ENCODE measurements at regions of chr20 and their contacts with region 1.

Region 1: GRCh38 chr20:52438324-52438963 is 246.9 kb upstream of the ZFP64 start:
- DNase-seq: no peak
- H3K4me3 ChIP-seq: no peak overlapping the region
- CTCF ChIP-seq: no peak
- POLR2A ChIP-seq: no peak

Region 2: DNA sequence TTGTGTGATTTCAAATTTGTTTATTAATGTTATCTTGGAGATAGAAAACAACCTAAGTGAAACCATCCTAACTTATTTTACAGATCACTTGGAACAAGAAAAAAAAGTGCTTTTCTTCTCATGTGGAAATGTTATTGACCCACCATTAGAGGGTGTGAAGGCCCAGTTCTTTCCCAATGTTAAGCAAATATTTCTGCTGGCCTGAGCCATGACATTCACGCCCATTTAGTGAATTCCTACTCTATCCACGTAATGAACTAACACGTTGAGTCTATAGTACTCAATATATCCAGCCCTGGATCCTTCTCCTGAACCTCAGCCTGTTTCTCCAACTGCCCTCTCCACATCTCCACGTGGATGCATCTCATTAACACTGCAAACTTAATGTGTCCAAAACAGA is 66.3 kb before region 1 on chr20:
- intact Hi-C with region 1: no loop called
- DNase-seq: no peak
- H3K4me3 ChIP-seq: no peak overlapping the region
- CTCF ChIP-seq: no peak
- POLR2A ChIP-seq: no peak

Region 3: DNA sequence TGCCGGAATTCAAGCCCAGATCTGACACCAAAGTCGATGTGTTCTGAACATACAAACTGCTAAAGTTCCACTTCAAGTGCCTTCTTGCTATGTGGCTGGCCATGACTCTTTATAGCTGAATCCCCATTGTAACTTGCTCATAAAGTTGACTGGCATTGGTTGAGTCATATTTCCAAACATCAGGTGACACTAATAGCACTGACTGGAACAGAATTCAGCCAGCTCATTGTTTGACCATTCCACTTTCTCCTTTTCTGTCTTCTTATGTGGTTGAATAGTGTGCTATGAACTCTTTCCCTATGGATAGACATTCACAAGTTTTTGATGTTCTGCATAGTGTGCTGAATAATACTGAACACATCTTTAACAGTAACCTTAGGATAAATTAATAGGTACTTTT is 19.4 kb after region 1 on chr20:
- intact Hi-C with region 1: loop called (anchors 1 kb)
- DNase-seq: no peak
- H3K4me3 ChIP-seq: no peak overlapping the region
- CTCF ChIP-seq: no peak
- POLR2A ChIP-seq: no peak

Measured in lower leg skin (tissue), 4 donors.